ENCODE measurements at regions of chr20 and their contacts with region 1.

Region 1: DNA sequence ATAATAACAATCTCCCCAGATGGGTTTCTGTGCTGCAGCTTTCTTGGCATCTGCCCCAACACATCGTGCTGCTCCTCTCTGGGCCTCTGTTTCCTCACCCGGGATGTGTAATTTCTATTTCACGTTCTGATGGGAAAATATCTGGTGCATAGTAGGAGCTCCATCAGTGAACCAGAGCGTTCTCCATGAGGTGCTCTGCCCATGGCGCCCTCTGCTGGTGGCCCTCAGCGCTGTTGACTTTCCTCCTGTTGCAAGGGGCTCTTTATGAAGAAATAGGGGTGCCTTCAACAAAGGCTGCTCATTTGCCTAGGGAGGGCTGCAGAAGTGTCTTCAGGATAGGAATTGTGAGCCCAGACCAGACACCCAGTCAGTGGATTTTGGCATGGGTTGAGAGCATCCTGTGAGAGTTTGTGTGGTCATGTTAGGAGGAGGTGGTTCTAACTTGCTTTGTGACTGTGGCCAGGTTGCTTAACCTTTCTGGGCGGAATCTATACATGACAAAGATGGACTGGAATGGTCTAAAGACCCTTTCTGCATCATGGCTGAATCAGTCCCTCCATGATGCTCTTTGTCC is 8.1 kb downstream of the SCRT2 start:
- DNase-seq: peak; percentile 87
- ATAC-seq: peak; percentile 54
- H3K4me3 Mint-ChIP-seq: no peak overlapping the region
- H3K27ac Mint-ChIP-seq: no peak overlapping the region
- H3K4me1 Mint-ChIP-seq: peaks cover 49% of the 10 kb centered on the region
- H3K27me3 Mint-ChIP-seq: peaks cover 30% of the 10 kb centered on the region
- CTCF ChIP-seq: peak; percentile 84

Region 2: DNA sequence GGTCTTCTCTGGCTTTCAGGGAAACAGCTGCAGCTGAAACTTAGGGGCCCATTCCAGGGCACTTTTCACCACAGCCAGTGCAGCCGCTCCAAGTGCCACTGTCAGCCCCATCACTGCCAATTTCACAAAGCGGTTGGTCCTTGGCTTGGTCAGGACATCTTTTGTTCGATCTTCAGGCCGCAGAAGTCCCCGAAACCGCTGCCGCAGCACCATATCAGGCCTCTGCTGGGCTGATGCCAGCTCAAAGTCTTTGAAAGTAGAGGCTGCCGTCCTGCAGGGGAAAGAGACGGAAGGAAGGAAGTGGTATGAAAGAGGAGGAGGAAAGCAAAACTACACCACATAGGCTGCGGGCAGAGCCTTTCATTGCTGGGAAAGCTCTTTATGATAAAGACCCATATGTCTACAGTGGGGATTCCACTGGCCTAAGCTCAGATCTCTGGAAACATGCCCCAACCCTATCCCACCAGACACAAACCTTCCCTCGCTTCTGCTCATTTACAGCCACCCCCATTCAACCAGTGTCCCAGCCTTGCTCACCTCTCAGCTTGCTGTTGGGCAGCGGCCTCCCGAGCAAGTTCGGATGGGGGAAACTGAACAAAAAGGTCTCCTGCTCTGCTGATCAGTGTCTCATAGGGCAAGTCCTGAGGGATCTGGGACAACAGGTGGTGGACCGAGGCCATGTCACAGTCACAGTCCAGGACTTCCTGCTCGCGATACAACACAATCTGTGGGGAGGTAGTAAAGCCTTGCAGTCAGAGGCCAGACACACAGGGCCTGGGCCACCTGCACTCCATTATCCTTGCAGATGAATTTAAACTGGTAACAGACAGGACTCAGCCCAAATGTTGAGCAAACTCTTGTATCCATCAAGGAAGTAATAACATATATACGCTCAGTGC is 228.7 kb before region 1 on chr20:
- CTCF ChIA-PET with region 1: no interaction called
- POLR2A ChIA-PET with region 1: no interaction called
- DNase-seq: no peak
- ATAC-seq: no peak
- H3K4me3 Mint-ChIP-seq: no peak overlapping the region
- H3K27ac Mint-ChIP-seq: no peak overlapping the region
- H3K4me1 Mint-ChIP-seq: peaks cover 14% of the 10 kb centered on the region
- H3K27me3 Mint-ChIP-seq: peaks cover 34% of the 10 kb centered on the region
- CTCF ChIP-seq: no peak

Region 3: GRCh38 chr20:543369-544152 is 123.9 kb before region 1 on chr20 and contains the start of gene CSNK2A1:
- CTCF ChIA-PET with region 1: interaction called, 17 read pairs
- POLR2A ChIA-PET with region 1: interaction called, 4 read pairs
- DNase-seq: peak; percentile 96
- ATAC-seq: peak; percentile 93
- H3K4me3 Mint-ChIP-seq: peak within 1 kb of the TSS; percentile 87
- H3K27ac Mint-ChIP-seq: peak within 1 kb of the TSS; percentile 96
- H3K4me1 Mint-ChIP-seq: peaks cover 47% of the 10 kb centered on the region
- H3K27me3 Mint-ChIP-seq: peaks cover 38% of the 10 kb centered on the region
- CTCF ChIP-seq: no peak
- total RNA-seq, gene CSNK2A1: 235 to 244 TPM (median 236 TPM) in 3 replicates

Region 4: DNA sequence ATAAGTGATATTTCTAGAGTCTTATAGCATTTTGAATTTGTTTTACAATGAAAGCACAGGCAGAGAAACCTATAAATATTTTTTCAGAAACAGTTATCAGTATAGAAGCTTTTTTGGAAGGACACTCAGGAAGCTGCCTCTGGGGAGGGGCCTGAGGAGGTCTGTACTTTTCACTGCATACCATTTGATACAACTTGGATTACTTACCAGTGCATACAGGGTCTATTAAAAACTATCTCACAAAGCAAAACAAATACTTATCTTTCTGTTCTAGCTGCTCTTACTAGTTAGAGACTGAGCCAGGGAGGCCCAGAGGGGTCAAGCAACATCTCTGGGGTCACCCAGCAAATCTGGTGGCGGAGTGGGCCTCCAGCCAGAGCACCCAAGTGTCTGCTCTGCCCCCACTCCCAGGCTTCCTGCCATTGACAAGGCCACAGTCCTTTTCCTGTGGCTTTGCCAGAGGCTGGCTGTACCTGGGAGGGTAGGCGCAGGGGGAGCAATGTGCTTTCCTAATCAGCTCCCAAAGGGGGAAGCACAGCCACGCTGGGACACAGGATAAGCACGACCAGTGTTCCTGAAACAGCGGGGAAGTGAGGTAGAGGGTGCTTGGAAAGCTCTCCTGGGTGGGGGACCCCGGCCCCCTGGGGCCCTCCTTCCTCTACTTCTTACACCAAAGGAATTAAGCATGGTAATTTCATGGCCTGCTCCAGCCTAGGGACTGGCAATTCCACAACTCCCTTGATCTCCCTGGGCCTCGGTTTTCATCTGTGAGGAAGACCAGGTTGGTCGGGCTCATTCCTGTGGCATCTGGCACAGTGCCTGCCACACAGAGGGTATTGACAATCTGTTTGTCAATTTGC is 65.1 kb before region 1 on chr20:
- CTCF ChIA-PET with region 1: interaction called, 11 read pairs
- POLR2A ChIA-PET with region 1: no interaction called
- DNase-seq: no peak
- ATAC-seq: no peak
- H3K4me3 Mint-ChIP-seq: no peak overlapping the region
- H3K27ac Mint-ChIP-seq: 0 out of 2 replicates have a peak overlapping the region, but pooled peaks have one; percentile 64
- H3K4me1 Mint-ChIP-seq: no peaks in the 10 kb centered on the region
- H3K27me3 Mint-ChIP-seq: no peaks in the 10 kb centered on the region
- CTCF ChIP-seq: no peak

Region 5: DNA sequence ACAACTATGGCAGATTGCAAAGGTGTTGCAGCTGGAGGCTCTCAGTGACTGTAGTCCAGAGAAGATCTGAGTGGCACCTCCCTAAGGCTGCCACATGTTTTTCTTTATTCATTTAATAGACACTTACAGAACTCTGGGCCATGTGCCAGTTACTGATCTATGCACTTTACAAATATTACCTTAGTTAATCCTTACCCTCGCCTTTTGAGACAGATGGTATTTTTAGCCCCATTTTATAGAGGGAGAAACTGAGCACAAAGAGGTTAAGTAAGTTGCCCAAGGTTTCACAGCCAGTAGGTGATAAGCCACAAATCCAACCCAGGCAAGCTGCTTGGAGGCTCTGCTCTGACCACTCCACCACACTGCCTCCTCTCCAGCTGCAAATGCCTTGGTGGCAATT is 14.6 kb after region 1 on chr20:
- CTCF ChIA-PET with region 1: interaction called, 30 read pairs
- POLR2A ChIA-PET with region 1: no interaction called
- DNase-seq: no peak
- ATAC-seq: no peak
- H3K4me3 Mint-ChIP-seq: no peak overlapping the region
- H3K27ac Mint-ChIP-seq: no peak overlapping the region
- H3K4me1 Mint-ChIP-seq: no peaks in the 10 kb centered on the region
- H3K27me3 Mint-ChIP-seq: peaks cover 16% of the 10 kb centered on the region
- CTCF ChIP-seq: no peak

Region 6: DNA sequence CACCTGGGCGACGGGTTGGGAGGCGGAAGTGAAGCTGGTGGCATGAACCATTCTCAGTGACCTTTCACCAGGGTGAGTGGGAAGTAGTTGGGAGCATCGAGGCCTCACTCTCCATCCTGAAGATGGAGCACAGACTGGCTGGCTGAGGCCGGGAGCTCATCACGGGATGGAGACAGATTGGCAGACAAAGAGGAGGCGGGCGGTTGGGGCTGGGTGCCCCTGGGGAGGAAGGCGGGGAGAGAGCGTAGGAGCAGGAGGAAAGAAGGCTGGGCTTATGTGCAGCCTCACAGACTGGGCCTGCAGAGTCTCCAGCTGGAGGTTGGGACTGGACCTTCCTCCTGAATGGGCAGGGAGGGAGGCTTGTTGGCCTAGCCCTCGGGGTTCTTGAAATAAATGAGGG is 52.3 kb after region 1 on chr20:
- CTCF ChIA-PET with region 1: interaction called, 12 read pairs
- POLR2A ChIA-PET with region 1: no interaction called
- DNase-seq: no peak
- ATAC-seq: peak; percentile 61
- H3K4me3 Mint-ChIP-seq: no peak overlapping the region
- H3K27ac Mint-ChIP-seq: no peak overlapping the region
- H3K4me1 Mint-ChIP-seq: peaks cover 10% of the 10 kb centered on the region
- H3K27me3 Mint-ChIP-seq: peaks cover 14% of the 10 kb centered on the region; the same call in 1 of the 2 replicates
- CTCF ChIP-seq: no peak

Region 7: DNA sequence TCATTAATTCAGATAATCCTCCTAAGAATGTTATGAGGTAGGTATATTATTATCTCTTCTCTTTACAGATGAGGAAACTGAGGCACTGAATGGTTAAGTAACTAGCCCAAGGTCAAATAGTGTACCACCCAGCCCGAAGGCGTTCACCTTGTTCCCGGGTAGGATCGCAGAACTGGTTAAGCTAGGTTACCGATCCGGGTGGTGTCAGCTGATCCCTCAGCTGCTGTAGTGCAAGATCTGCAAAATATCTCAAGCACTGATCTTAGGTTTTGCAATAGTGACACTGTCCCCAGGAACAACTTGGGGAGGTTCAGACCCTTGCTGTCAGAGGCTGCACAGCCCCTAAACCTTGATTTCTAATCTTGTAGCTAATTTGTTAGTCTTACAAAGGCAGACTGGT is 72.7 kb after region 1 on chr20:
- CTCF ChIA-PET with region 1: interaction called, 35 read pairs
- POLR2A ChIA-PET with region 1: no interaction called
- DNase-seq: no peak
- ATAC-seq: no peak
- H3K4me3 Mint-ChIP-seq: no peak overlapping the region
- H3K27ac Mint-ChIP-seq: no peak overlapping the region
- H3K4me1 Mint-ChIP-seq: peaks cover 7% of the 10 kb centered on the region
- H3K27me3 Mint-ChIP-seq: peaks cover 30% of the 10 kb centered on the region
- CTCF ChIP-seq: no peak

Region 8: GRCh38 chr20:1020614-1021013 is 353.1 kb after region 1 on chr20:
- CTCF ChIA-PET with region 1: no interaction called
- POLR2A ChIA-PET with region 1: no interaction called
- DNase-seq: no peak
- ATAC-seq: no peak
- H3K4me3 Mint-ChIP-seq: no peak overlapping the region
- H3K27ac Mint-ChIP-seq: no peak overlapping the region
- H3K4me1 Mint-ChIP-seq: no peaks in the 10 kb centered on the region
- H3K27me3 Mint-ChIP-seq: peaks cover 22% of the 10 kb centered on the region
- CTCF ChIP-seq: no peak

Measured in WTC11 (cell line).